Endothelial cell of umbilical vein (primary cell): ENCODE measurements at regions of chr17 and their contacts with region 1.

Region 1: GRCh38 chr17:8376271-8377067 is at the start of gene KRABD2:
- DNase-seq: peak; percentile 92
- H3K4me3 ChIP-seq: peak within 1 kb of the TSS; percentile 45 to 71 (median 64)
- H3K27ac ChIP-seq: peak within 1 kb of the TSS; percentile 75
- H3K4me1 ChIP-seq: peaks cover 27% of the 10 kb centered on the region
- H3K27me3 ChIP-seq: no peaks in the 10 kb centered on the region
- CTCF ChIP-seq: peak; percentile 65 to 90
- POLR2A ChIP-seq: peak; percentile 97

Region 2: DNA sequence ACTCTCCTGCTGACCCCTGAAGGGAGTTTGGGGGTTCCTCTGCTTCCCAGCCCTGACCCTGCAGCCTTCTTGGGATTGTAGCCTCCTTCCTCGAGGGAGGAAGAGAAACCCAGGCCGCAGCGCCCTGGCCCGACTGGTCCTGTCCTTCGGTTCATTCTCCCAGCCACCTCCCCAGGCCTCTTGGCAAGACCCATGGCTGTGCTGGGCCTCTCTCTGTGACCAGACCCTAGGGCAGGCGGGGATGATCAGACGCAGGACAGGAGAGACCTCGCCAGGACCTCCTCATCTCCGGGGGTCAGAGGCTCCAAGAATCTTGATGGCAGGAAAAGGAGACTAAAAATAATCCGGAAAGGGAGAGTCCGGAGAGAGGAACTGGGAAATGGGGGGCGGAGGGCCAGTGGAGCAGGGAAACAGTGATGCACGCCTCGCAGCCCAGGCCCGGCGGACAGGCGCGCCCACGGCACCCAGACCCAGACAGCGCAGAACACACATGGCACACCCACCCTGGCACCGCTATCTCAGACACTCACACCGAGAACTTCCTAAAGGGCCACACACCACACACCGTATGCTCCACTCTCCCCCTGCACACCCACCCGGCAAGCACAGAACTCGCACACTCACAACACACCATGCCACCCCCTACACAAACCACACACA is 65.2 kb before region 1 on chr17:
- CTCF ChIA-PET with region 1: interaction called, 3 read pairs
- POLR2A ChIA-PET with region 1: no interaction called
- dilution Hi-C with region 1: no loop called
- intact Hi-C with region 1: loop called (anchors 1 kb)
- DNase-seq: peak; percentile 46
- H3K4me3 ChIP-seq: peak overlapping the region; percentile 29 to 67 (median 60)
- H3K27ac ChIP-seq: peak overlapping the region; percentile 48
- H3K4me1 ChIP-seq: peaks cover 31% of the 10 kb centered on the region
- H3K27me3 ChIP-seq: no peaks in the 10 kb centered on the region
- CTCF ChIP-seq: no peak
- POLR2A ChIP-seq: no peak

Region 3: DNA sequence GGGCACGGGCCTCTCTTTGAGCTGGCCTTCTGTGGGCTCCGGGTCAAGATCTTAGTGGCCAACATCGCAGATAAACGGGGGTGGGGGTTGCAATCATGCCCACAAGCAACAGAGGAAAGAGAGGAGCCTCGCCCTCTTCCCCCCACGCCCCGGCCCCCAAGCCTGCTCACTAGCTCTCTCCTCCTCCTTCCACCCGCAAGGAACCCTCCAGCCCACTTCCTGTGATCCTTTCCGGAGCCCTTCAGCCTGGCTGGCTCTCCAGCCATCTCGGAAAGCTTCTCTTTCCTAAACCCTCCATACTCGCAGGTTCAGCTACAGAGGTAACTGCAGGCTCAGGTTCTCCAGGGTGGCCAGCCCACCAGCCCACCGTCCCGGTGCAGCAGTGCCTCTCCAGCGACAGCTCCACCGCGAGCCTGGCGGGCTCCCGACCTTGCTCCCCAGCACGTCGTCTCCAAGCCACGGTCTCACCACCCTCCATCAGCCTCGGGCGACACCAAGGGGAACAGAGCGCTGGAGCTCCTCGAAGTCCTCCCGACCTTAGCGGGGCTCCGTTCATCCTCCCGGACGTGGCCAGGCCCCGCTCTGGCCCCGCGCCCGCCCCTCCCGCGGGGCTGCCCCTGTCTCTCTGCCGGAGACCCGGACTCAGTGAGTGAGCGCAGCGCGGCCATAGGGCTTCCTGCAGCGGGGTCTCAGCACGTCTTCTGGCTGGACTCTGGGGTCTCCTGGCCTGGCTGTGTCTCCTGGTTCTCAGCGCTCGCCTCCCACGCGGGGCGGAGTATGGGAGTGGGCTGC is 49.8 kb before region 1 on chr17:
- CTCF ChIA-PET with region 1: interaction called, 39 read pairs
- POLR2A ChIA-PET with region 1: interaction called, 17 read pairs
- dilution Hi-C with region 1: no loop called
- intact Hi-C with region 1: loop called (anchors 1 kb)
- DNase-seq: peak; percentile 56
- H3K4me3 ChIP-seq: peak overlapping the region; percentile 60 to 74 (median 71)
- H3K27ac ChIP-seq: peak overlapping the region; percentile 86
- H3K4me1 ChIP-seq: peaks cover 20% of the 10 kb centered on the region
- H3K27me3 ChIP-seq: no peaks in the 10 kb centered on the region
- CTCF ChIP-seq: peak in 1 of 2 donors; percentile 1
- POLR2A ChIP-seq: peak; percentile 59

Region 4: DNA sequence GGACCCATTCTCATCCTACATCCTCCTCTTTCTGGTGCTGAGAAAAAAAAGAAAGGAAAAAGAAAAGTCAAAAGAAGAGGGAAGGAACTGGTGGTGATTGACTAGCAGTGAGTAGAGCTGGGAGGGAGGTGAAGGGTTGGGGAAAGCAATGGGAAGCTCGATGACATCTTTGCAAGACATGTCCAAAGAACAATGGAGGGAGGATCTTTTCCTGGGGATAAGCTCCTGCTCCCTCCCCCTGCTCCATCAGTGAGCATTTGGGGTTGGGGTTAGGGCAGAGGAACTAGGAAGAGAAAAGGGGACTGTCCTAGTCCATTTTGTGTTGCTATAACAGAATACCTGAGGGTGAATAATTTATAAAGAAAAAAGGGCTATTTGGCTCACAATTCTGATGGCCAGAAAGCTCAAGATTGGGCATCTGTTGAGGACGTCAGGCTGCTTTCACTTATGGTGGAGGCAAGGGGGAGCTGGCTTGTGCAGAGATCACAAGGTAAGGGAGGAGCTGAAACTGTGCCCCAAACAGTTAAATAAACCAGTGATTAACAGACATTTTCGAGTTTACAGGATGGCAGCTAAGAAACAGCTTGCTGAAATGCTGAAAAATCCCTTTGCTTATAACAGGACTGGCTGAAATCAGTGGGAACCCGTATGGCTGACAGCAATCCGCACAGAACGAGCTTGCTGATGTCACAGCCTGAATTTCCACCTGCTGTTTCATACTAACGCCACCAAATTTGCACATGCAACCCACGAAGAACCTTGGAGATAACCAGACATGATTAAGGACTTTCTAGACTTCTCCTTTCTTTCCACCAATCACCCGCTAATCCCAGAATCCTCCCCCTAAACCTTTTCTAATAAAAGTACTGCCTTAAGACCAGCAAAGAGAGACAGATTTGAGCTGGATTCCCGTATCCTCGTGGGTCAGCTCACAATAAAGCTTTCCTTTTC is 38.4 kb before region 1 on chr17:
- CTCF ChIA-PET with region 1: interaction called, 16 read pairs
- POLR2A ChIA-PET with region 1: no interaction called
- dilution Hi-C with region 1: no loop called
- intact Hi-C with region 1: no loop called
- DNase-seq: no peak
- H3K4me3 ChIP-seq: no peak overlapping the region
- H3K27ac ChIP-seq: no peak overlapping the region
- H3K4me1 ChIP-seq: no peaks in the 10 kb centered on the region
- H3K27me3 ChIP-seq: peaks cover 0 to 1% of the 10 kb centered on the region in 2 experiments
- CTCF ChIP-seq: no peak
- POLR2A ChIP-seq: no peak